Activated T-helper 1 cell treated with anti-CD3 and anti-CD28 coated beads, Interleukin-12 subunit alpha, Interleukin-12 subunit beta, Interleukin-2, Interleukin-4 antibody, amounts not matched to agents 30 ng/mL and 10 ng/mL and 1 ng/mL, durations not matched to agents 14 hours and 24 hours and 36 hours (primary cell): ENCODE measurements at regions of chr14 and their contacts with region 1.

Region 1: GRCh38 chr14:39232554-39233415 is 930 bp upstream of the MIA2 start:
- DNase-seq: no peak
- H3K4me3 Mint-ChIP-seq: no peak overlapping the region
- H3K27ac Mint-ChIP-seq: peak overlapping the region; percentile 70
- H3K4me1 Mint-ChIP-seq: peaks cover 46% of the 10 kb centered on the region
- H3K27me3 Mint-ChIP-seq: no peaks in the 10 kb centered on the region

Region 2: GRCh38 chr14:39114073-39114838 is 118.5 kb before region 1 on chr14 and contains the start of gene GEMIN2:
- intact Hi-C with region 1: loop called (anchors 2 kb)
- DNase-seq: peak; percentile 94
- H3K4me3 Mint-ChIP-seq: peak within 1 kb of the TSS; percentile 92
- H3K27ac Mint-ChIP-seq: peak within 1 kb of the TSS; percentile 96
- H3K4me1 Mint-ChIP-seq: peaks cover 10% of the 10 kb centered on the region
- H3K27me3 Mint-ChIP-seq: no peaks in the 10 kb centered on the region
- total RNA-seq, gene GEMIN2: 22.2 and 23.7 TPM in 2 replicates

Region 3: GRCh38 chr14:39219075-39219499 is 13.7 kb before region 1 on chr14:
- intact Hi-C with region 1: loop called (anchors 1 kb)
- DNase-seq: no peak
- H3K4me3 Mint-ChIP-seq: no peak overlapping the region
- H3K27ac Mint-ChIP-seq: no peak overlapping the region
- H3K4me1 Mint-ChIP-seq: peaks cover 17% of the 10 kb centered on the region
- H3K27me3 Mint-ChIP-seq: peaks cover 3% of the 10 kb centered on the region

Region 4: DNA sequence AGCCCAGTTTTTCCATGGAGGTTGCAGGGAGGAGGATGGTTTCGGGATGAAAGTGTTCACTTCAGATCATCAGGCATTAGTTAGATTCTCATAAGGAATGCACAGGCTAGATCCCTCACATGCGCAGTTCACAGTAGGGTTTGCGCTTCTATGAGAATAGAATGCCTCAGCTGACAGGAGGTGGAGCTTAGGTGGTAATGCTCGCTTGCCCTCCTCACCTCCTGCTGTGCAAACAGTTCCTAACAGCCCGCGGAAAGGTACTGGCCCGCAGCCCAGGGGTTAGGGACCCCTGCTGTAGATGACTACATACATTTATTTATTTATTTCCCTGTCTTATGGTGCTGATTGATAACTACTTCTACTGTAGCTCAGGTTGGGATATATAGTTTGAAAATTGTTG is 106.2 kb after region 1 on chr14:
- intact Hi-C with region 1: no loop called
- DNase-seq: no peak
- H3K4me3 Mint-ChIP-seq: no peak overlapping the region
- H3K27ac Mint-ChIP-seq: no peak overlapping the region
- H3K4me1 Mint-ChIP-seq: peaks cover 14% of the 10 kb centered on the region
- H3K27me3 Mint-ChIP-seq: no peaks in the 10 kb centered on the region

Region 5: GRCh38 chr14:39368261-39368959 is 135.6 kb after region 1 on chr14:
- intact Hi-C with region 1: loop called (anchors 1 kb)
- DNase-seq: no peak
- H3K4me3 Mint-ChIP-seq: no peak overlapping the region
- H3K27ac Mint-ChIP-seq: no peak overlapping the region
- H3K4me1 Mint-ChIP-seq: no peaks in the 10 kb centered on the region
- H3K27me3 Mint-ChIP-seq: no peaks in the 10 kb centered on the region

Region 6: DNA sequence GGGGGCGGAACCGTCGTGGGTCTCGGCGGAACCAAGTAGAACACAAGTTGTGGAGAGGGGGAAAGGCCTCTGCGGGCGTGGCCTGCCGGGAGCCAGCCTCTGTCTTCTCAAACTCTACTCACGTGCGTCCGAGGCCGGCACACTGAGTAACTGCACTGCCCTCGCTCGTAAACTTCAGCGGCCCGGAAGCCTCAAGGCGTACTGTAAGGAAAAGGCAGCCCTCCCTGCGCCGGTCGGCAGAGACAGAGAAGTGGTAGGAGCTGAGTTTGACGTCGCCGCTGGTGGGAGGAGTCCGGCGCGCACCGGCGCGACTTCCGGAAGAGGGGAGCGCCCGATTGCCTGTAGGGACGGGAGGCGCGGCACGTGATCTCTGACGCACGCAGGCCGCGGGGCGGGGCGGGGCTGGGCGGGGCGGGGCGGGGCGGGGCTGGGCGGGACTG is 199.4 kb after region 1 on chr14 and contains the start of gene FBXO33:
- intact Hi-C with region 1: loop called (anchors 1 kb)
- DNase-seq: peak; percentile 96
- H3K4me3 Mint-ChIP-seq: peak within 1 kb of the TSS; percentile 99
- H3K27ac Mint-ChIP-seq: peak within 1 kb of the TSS; percentile 100
- H3K4me1 Mint-ChIP-seq: peaks cover 41% of the 10 kb centered on the region
- H3K27me3 Mint-ChIP-seq: no peaks in the 10 kb centered on the region
- total RNA-seq, gene FBXO33: 18.1 and 20.5 TPM in 2 replicates